Thyroid gland (tissue), 4 donors: ENCODE measurements at regions of chr5 and their contacts with region 1.

Region 1: DNA sequence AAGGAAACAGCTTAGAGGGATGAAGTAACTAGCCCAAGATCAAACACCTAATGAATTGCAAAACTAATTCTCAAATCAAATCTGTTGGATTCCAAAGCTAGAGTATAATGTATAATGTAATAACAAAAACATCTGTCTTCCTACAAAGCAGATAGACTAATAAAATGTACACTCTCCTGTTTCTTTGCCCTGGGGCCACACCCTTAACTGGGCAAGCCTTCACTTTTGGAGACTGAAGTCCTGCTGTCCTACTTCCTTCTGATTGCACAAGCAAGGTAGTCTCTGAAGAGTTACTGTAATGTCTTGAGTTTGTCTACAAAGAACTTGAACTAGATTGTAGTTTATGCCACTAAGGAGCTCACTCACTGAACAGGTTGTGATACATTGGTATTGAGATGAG is 2.5 kb downstream of the TTC1 start:
- DNase-seq: no peak
- H3K4me3 ChIP-seq: no peak overlapping the region
- H3K27ac ChIP-seq: no peak overlapping the region
- H3K4me1 ChIP-seq: peaks cover 7 to 17% of the 10 kb centered on the region in 2 donors
- H3K27me3 ChIP-seq: no peaks in the 10 kb centered on the region
- CTCF ChIP-seq: no peak
- POLR2A ChIP-seq: no peak

Region 2: DNA sequence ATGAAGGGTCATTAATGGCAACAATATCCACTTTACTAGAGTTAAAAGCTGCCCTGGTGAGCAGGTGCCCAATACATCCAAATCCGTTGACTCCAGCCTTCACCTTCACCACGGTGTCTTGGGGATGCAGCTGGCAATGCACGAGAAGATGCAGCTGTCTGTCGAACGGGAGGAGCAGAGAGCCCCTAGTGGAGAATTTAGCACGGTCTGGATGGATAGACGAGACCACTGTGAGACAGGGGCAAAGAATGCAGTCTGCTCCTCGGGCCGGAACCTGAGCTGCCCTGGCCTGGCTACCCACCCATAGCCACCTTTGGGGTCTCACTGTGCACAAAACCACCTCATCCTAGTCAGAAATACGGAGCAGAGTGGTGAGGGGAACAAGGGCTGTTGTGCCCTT is 60.1 kb before region 1 on chr5:
- intact Hi-C with region 1: no loop called
- DNase-seq: no peak
- H3K4me3 ChIP-seq: no peak overlapping the region
- H3K27ac ChIP-seq: no peak overlapping the region
- H3K4me1 ChIP-seq: no peaks in the 10 kb centered on the region
- H3K27me3 ChIP-seq: no peaks in the 10 kb centered on the region
- CTCF ChIP-seq: peak in 2 of 6 experiments; percentile 8 to 20
- POLR2A ChIP-seq: no peak

Region 3: GRCh38 chr5:160119905-160120266 is 108.4 kb after region 1 on chr5:
- intact Hi-C with region 1: loop called (anchors 10 kb)
- DNase-seq: no peak
- H3K4me3 ChIP-seq: no peak overlapping the region
- H3K27ac ChIP-seq: no peak overlapping the region
- H3K4me1 ChIP-seq: peaks cover 5 to 7% of the 10 kb centered on the region in 2 donors
- H3K27me3 ChIP-seq: no peaks in the 10 kb centered on the region
- CTCF ChIP-seq: peak in 5 of 6 experiments; percentile 28 to 50 (median 38)
- POLR2A ChIP-seq: no peak

Region 4: GRCh38 chr5:160269017-160269416 is 257.5 kb after region 1 on chr5:
- intact Hi-C with region 1: no loop called
- DNase-seq: peak; percentile 89
- H3K4me3 ChIP-seq: no peak overlapping the region
- H3K27ac ChIP-seq: peak overlapping the region; percentile 8 to 86 (median 58)
- H3K4me1 ChIP-seq: peaks cover 52 to 76% of the 10 kb centered on the region in 2 donors
- H3K27me3 ChIP-seq: no peaks in the 10 kb centered on the region
- CTCF ChIP-seq: no peak
- POLR2A ChIP-seq: no peak